ENCODE measurements at regions of chr3 and their contacts with region 1.

Region 1: GRCh38 chr3:168213920-168214319 is 118.2 kb upstream of the GOLIM4 start:
- DNase-seq: no peak
- ATAC-seq: no peak
- H3K4me3 ChIP-seq: no peak overlapping the region
- H3K27ac ChIP-seq: no peak overlapping the region
- H3K4me1 ChIP-seq: no peaks in the 10 kb centered on the region
- H3K27me3 ChIP-seq: no peaks in the 10 kb centered on the region
- CTCF ChIP-seq: no peak
- POLR2A ChIP-seq: no peak

Region 2: DNA sequence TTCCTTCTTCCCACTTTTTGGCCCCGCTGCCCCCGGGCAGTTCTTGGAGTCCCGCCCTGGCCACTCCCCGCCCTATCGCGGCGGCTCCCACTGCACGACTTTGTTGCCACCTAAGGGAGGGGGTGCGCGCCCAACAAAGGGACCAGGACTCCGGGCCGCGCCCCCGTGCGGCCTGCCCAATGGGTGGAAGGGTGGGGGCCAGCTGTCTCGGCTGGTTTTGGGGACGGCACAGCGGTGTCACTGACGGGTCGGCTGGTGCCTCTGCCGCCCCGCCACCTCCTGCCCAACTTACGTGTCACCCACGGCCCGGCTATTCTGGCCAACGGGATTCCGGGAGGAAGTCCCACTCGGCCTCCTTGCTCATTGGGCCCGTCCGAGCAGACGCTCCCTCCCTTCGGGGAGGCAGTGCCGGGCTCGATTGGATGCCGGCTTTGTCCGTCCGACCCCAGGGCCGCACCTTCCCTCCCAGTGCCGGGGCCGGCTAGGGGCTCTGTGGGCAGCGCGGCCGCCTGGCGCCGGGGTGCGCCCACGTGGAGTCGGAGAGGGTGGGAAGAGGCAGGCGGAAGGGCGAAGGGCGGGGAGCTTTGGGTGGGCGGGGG is 118.2 kb before region 1 on chr3 and contains the start of gene GOLIM4:
- in situ Hi-C with region 1: no loop called
- intact Hi-C with region 1: no loop called
- DNase-seq: peak; percentile 95 to 96
- ATAC-seq: peak; percentile 87 to 91
- H3K4me3 ChIP-seq: peak within 1 kb of the TSS; percentile 73 to 92 (median 88)
- H3K27ac ChIP-seq: peak within 1 kb of the TSS; percentile 92 to 97 (median 94)
- H3K4me1 ChIP-seq: peaks cover 42 to 44% of the 10 kb centered on the region in 2 donors
- H3K27me3 ChIP-seq: no peaks in the 10 kb centered on the region
- CTCF ChIP-seq: peak in 1 of 5 experiments; percentile 21
- POLR2A ChIP-seq: peak; percentile 85 to 91
- total RNA-seq, gene GOLIM4: 13.0 to 20.8 (median 17.8) TPM

Region 3: DNA sequence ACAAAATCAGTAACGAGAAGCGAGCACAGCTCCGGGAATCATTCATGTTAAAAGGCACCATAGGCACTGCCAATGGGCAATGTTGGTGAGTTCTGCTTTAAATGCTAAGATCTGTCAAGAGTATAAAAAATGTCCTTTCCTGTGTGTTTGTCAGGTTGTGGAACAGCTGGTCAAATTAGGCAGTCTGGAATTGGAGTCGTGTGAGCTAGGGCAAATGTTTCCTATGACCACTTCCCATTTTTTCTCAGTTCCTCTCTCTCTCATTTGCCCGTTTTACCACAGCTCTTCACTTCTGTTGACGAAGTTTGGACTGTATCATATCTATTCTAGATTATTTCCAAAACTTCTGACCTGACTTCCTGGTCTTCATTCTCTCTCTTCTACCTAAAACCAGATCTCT is 57.4 kb before region 1 on chr3:
- in situ Hi-C with region 1: no loop called
- intact Hi-C with region 1: no loop called
- DNase-seq: no peak
- ATAC-seq: no peak
- H3K4me3 ChIP-seq: no peak overlapping the region
- H3K27ac ChIP-seq: no peak overlapping the region
- H3K4me1 ChIP-seq: no peaks in the 10 kb centered on the region
- H3K27me3 ChIP-seq: no peaks in the 10 kb centered on the region
- CTCF ChIP-seq: no peak
- POLR2A ChIP-seq: no peak

Region 4: DNA sequence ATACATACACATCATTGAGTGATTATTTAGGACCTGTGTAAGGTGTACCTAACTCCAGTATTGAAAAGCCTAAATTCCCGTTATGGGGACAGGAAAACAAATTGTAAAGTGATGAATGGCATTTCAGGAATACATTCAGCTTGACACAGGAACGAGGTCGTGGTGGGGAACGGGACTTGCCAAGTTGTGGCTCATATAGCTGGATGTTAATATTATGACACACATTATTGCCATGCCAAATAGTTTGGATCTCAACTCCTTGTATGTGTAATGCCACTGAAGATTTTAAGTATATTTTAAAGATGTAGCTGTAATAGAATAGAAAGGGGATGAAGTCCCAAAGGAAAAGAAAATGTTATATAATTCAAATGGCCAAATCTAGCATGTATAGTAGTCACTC is 109.0 kb after region 1 on chr3:
- in situ Hi-C with region 1: no loop called
- intact Hi-C with region 1: no loop called
- DNase-seq: no peak
- ATAC-seq: no peak
- H3K4me3 ChIP-seq: no peak overlapping the region
- H3K27ac ChIP-seq: no peak overlapping the region
- H3K4me1 ChIP-seq: no peaks in the 10 kb centered on the region
- H3K27me3 ChIP-seq: no peaks in the 10 kb centered on the region
- CTCF ChIP-seq: no peak
- POLR2A ChIP-seq: no peak

Region 5: DNA sequence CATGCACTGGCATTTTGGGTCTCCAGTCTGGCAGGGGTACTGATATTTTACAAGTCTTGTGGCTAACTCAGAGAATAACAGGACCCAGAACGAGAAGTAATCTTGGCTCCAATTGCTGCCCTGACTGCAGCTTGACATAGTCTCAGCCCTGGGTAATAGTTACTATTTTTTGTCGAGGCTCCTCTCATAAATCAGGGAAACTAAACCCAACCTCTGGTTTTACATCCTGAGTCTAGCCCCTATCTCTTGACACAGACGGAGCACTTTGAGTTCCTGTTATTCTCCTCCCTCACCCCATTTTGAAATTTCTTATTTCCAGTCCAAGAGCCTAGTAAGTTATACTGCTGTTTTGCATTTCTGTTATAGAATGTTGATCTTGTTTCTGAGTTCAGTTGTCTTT is 157.9 kb after region 1 on chr3:
- in situ Hi-C with region 1: no loop called
- intact Hi-C with region 1: no loop called
- DNase-seq: no peak
- ATAC-seq: no peak
- H3K4me3 ChIP-seq: no peak overlapping the region
- H3K27ac ChIP-seq: no peak overlapping the region
- H3K4me1 ChIP-seq: no peaks in the 10 kb centered on the region
- H3K27me3 ChIP-seq: no peaks in the 10 kb centered on the region
- CTCF ChIP-seq: no peak
- POLR2A ChIP-seq: no peak

Region 6: DNA sequence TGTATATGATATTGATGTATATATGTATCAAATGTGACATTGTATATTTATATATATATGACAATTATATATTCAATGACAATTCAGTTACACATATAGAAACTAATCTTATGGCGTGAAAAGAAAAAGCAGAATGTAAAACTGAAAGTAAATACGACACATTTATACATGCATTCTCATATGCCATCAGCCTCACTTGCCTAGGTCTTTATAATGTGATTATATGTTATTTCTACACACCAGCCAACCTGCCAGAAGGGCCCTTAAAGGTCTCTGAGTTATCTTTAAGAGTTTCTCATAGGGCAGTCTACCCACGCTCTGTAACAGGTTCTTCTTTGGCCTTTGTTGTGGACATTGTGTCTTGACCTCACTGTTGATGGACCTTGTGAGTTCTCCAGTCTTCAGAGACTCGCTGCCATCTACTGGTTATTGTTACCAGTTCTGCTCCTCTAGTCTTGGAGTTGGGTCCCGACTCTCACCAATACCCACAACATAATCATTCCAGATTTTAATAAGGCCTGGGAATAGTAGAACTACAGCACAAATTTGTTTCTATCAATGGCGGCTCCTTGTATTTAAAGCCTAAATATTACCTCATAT is 253.3 kb after region 1 on chr3:
- in situ Hi-C with region 1: loop called in 1 of 4 experiments (anchors 25 kb)
- intact Hi-C with region 1: loop called (anchors 5 kb)
- DNase-seq: no peak
- ATAC-seq: no peak
- H3K4me3 ChIP-seq: no peak overlapping the region
- H3K27ac ChIP-seq: no peak overlapping the region
- H3K4me1 ChIP-seq: no peaks in the 10 kb centered on the region
- H3K27me3 ChIP-seq: no peaks in the 10 kb centered on the region
- CTCF ChIP-seq: peak in 1 of 5 experiments; percentile 17
- POLR2A ChIP-seq: no peak

Region 7: GRCh38 chr3:168847291-168847883 is 633.5 kb after region 1 on chr3:
- in situ Hi-C with region 1: loop called in 3 of 4 experiments (anchors 5 to 25 kb)
- intact Hi-C with region 1: loop called (anchors 2 kb)
- DNase-seq: no peak
- ATAC-seq: no peak
- H3K4me3 ChIP-seq: no peak overlapping the region
- H3K27ac ChIP-seq: no peak overlapping the region
- H3K4me1 ChIP-seq: no peaks in the 10 kb centered on the region
- H3K27me3 ChIP-seq: peaks cover 0 to 6% (median 0%) of the 10 kb centered on the region in 3 donors
- CTCF ChIP-seq: peak in 4 of 5 experiments; percentile 12 to 52 (median 40)
- POLR2A ChIP-seq: no peak